ENCODE measurements at regions of chr4 and their contacts with region 1.

Region 1: GRCh38 chr4:139554893-139555704 is 920 bp downstream of the SETD7 start:
- DNase-seq: peak; percentile 94

Region 2: GRCh38 chr4:139301113-139301820 is 253.8 kb before region 1 on chr4 and contains the start of gene NAA15:
- intact Hi-C with region 1: loop called (anchors 5 kb)
- DNase-seq: peak; percentile 99
- total RNA-seq, gene NAA15: 37.9 TPM

Region 3: DNA sequence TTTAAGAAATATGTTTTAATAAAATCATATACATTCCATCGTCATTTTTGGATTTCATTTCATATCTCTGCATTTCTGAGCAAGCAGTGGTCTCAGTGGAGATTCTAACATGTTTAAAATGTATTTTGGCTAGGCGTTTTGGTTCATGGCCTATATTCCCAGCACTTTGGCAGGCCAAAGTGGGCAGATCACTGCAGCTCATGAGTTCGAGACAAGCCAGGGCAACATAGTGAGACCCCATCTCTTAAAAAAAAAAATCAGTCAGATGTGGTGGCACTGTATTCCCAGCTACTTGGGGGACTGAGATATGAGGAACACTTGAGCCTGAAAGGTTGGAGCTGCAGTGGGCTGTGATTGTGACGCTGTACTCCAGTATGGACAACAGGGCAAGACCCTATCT is 168.7 kb before region 1 on chr4:
- intact Hi-C with region 1: no loop called
- DNase-seq: no peak